Mucosa of descending colon (tissue), 3 donors: ENCODE measurements at regions of chr5 and their contacts with region 1.

Region 1: DNA sequence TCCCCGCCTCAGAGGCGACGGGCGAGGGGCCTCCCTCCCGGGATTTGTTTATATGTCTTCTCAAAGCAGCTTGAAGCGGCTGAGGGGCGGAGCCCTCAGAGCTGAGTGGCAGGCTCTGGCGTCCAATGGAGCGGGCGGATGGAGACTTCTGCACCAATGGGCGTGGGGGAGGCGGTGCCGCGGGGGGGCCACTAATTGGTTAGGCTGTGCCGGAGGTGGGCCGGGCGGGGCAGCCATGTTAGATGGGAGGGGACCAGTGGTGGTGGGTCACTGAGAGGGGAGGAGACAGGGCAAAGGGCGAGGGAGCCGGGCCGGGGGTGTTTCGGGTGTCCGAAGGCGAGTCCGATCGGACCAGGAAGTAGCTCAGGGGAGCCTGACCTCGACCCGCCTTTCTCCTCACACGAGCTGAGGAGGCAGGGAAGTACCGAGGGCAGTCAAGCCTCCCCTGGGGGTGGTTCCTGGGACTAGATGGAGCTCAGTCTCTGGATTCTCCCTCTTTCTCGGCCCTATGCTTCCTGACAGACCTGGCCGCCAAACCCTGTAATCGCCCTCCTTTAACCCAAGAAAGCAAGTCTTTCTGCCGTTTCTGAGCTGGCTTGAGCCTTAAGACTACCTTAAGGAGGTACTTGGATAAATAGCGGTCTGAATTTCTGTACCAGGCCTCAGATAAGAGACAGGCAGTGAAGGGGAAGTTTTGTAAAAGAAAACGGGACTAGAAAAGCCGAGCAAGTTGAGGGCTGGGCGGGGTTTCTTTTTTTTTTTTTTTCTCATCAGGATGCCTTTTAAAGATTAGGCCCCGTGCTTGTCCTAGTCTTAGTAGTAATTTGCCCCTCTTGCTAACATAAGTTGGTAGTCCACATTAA is 1.1 kb downstream of the CREBRF start:
- DNase-seq: peak; percentile 99
- ATAC-seq: peak; percentile 91
- H3K4me3 ChIP-seq: peak overlapping the region; percentile 100
- H3K4me1 ChIP-seq: peaks cover 17% of the 10 kb centered on the region
- CTCF ChIP-seq: no peak

Region 2: GRCh38 chr5:172983542-172984242 is 73.6 kb before region 1 on chr5 and contains the start of gene ATP6V0E1:
- intact Hi-C with region 1: loop called in 1 of 2 experiments (anchors 2 kb)
- DNase-seq: peak; percentile 97 to 99 (median 98)
- ATAC-seq: peak; percentile 98
- H3K4me3 ChIP-seq: peak within 1 kb of the TSS; percentile 88
- H3K4me1 ChIP-seq: peaks cover 12% of the 10 kb centered on the region
- CTCF ChIP-seq: no peak
- total RNA-seq, gene ATP6V0E1: 174 to 194 (median 190) TPM